Activated CD4-positive, alpha-beta T cell treated with anti-CD3 and anti-CD28 coated beads for 36 hours (primary cell): ENCODE measurements at regions of chr5 and their contacts with region 1.

Region 1: DNA sequence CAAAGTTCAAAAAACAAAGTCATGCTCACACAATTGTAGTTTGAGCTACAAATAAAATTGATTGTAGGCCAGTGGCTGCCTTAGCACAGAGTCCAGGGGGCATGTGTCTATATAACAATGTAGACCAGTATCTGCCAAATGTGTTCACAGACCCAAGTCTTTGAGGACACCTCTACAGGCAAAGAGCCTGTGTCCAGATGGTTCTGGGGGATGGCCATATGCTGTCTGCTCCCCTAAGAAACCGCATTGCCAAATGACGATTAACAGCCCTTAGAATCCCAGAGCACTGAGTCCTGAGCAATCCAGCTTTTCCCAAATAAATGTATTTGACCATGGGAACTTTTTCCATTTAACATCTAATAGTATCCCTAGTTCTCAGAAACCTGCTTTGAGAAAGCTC is 169.6 kb downstream of the ADCY2 start:
- DNase-seq: no peak
- ATAC-seq: no peak
- H3K4me3 Mint-ChIP-seq: no peak overlapping the region
- H3K27ac Mint-ChIP-seq: no peak overlapping the region
- H3K4me1 Mint-ChIP-seq: no peaks in the 10 kb centered on the region
- H3K27me3 Mint-ChIP-seq: no peaks in the 10 kb centered on the region

Region 2: DNA sequence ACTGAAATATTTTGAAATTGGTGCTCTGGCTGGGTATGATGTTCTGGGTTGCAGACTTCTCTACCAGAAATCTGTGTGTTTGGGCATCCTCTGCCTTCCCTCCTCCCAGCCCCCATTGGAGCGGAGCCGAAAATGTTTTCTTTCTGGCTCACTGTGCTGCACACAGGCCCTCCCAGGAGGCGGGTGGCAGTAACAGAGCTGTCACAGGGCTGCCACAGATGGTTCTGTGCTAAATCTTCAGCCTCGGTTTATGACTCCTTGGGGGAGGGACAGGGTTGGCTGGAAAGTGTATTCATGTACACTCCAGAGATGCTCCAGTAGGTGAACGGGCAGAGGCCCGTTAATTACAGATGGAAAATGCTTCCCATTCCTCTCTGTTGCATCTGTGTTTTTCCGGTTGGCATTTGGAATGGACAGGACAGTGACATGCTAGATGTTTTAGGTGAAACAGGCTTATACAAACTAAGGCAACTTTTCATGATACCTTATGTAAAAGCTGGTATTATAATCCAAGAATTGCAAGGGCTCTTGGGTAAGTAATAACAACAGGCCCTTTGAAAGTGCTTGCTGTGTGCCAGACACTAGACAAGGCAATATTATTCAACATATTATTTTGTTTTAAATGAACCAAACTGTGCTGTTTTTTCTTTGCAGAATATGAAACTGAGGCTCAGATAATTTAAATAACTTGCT is 10.6 kb after region 1 on chr5:
- CTCF ChIA-PET with region 1: no interaction called
- POLR2A ChIA-PET with region 1: no interaction called
- intact Hi-C with region 1: loop called in 1 of 2 experiments (anchors 2 kb)
- DNase-seq: no peak
- ATAC-seq: no peak
- H3K4me3 Mint-ChIP-seq: no peak overlapping the region
- H3K27ac Mint-ChIP-seq: no peak overlapping the region
- H3K4me1 Mint-ChIP-seq: no peaks in the 10 kb centered on the region
- H3K27me3 Mint-ChIP-seq: peaks cover 2% of the 10 kb centered on the region